Mammary epithelial cell (primary cell): ENCODE measurements at regions of chr4 and their contacts with region 1.

Region 1: GRCh38 chr4:83139514-83140156 is 25.1 kb upstream of the PLAC8 start:
- DNase-seq: no peak
- H3K4me3 ChIP-seq: no peak overlapping the region
- H3K27ac ChIP-seq: no peak overlapping the region
- H3K4me1 ChIP-seq: no peaks in the 10 kb centered on the region
- H3K27me3 ChIP-seq: no peaks in the 10 kb centered on the region
- CTCF ChIP-seq: no peak

Region 2: DNA sequence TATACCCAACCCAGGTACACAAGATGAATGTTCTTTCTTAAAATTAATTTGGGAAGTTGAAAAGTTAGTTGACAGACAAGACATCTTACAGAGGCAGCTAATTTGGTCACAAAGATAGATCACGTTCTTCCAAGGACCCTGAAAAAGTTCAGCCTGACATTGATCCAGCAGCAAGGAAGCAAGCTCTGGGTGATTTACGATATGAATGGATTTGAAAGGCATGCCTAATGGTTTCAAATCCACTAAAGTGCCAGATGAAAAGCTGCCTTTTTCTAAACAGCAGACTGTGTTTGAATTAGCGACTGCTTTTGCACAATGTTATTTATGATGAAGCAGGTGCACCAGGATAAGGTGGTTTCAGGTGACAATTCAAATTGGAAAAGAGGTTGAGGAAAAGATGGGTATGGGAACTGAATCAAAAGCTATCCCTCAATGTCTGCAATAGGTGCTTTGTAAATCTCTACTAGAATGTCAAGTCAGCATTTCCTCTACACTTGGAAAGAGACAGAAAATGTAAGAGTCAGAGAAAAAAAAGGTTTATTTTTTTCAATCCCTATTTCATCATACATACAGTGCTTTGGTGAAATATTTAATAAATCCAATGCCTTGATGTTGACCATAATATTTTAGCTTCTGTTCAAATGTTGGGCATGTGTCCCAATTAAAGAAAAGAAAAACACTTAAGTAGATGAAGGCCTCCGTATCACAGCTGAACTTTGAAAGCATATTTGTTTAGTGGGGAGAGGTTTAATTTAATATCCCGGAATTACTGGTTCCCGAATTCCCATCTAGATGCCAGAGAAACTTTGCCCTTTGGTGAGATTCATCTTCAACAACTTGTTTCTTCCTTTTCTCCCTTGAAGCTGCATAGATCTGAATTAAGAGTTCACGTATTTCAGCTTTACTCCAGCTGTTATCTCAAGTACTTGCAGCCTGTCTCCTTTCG is 1674.0 kb before region 1 on chr4:
- CTCF ChIA-PET with region 1: interaction called, 16 read pairs
- dilution Hi-C with region 1: no loop called
- in situ Hi-C with region 1: no loop called
- intact Hi-C with region 1: no loop called
- DNase-seq: no peak
- H3K4me3 ChIP-seq: no peak overlapping the region
- H3K27ac ChIP-seq: no peak overlapping the region
- H3K4me1 ChIP-seq: peaks cover 11% of the 10 kb centered on the region
- H3K27me3 ChIP-seq: no peaks in the 10 kb centered on the region
- CTCF ChIP-seq: no peak

Region 3: DNA sequence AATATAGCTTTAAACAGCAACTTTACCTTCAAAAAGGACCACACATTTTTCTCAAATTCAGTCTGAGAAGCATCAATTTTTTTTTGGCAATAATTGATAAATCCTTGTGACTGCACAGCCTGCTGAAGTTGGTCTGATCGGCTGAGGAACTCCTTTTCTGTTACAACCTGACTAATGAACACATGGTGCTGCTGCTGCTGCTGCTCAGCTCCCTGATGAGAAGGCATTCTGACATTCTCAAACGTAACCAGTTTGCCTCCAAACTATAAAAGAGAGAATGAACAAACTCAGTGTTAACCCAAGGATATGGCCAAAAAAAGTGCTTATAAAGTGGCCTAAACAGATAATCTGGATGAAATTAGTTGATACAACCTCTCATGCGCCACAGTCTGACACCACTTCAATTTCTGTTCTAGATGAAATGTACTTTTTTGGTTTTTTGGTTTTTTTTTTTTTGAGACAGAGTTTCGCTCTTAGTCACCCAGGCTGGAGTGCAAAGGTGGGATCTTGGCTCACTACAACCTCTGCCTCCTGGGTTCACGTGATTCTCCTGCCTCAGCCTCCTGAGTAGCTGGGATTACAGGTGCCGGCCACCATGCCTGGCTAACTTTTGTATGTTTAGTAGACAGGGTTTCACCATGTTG is 275.2 kb before region 1 on chr4:
- CTCF ChIA-PET with region 1: no interaction called
- dilution Hi-C with region 1: no loop called
- in situ Hi-C with region 1: no loop called
- intact Hi-C with region 1: no loop called
- DNase-seq: no peak
- H3K4me3 ChIP-seq: no peak overlapping the region
- H3K27ac ChIP-seq: peak overlapping the region; percentile 98
- H3K4me1 ChIP-seq: peaks cover 19% of the 10 kb centered on the region
- H3K27me3 ChIP-seq: no peaks in the 10 kb centered on the region
- CTCF ChIP-seq: no peak

Region 4: GRCh38 chr4:83083925-83084475 is 55.6 kb before region 1 on chr4:
- CTCF ChIA-PET with region 1: no interaction called
- dilution Hi-C with region 1: loop called (anchors 5 kb)
- in situ Hi-C with region 1: no loop called
- intact Hi-C with region 1: no loop called
- DNase-seq: no peak
- H3K4me3 ChIP-seq: no peak overlapping the region
- H3K27ac ChIP-seq: no peak overlapping the region
- H3K4me1 ChIP-seq: peaks cover 13% of the 10 kb centered on the region
- H3K27me3 ChIP-seq: no peaks in the 10 kb centered on the region
- CTCF ChIP-seq: peak in 1 of 2 donors; percentile 6

Region 5: DNA sequence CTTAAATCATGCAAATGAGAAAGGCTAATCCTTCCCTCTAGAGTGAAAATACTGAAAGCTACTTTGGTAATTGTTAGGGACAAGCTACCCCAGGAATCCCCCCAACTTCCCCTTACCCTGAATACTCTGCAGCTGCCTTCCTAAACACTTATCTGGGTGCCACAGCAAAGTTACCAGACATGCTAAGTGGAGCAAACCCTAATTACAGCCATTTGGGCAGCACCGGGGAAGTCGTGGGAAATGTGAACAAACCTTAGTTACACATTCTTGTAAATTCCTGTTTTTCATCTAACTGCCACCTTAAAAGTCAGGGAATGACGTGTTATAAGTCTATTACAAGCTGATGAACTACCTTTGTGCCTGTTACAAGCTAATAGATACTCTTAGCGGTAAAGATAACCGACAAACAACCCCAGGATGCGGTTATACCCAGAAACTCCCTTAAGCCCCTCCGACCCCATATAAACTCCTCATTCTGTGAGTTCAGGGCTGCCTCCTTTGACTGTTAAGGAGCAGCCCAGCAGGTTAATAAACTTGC is 40.9 kb after region 1 on chr4:
- CTCF ChIA-PET with region 1: no interaction called
- dilution Hi-C with region 1: loop called (anchors 5 kb)
- in situ Hi-C with region 1: no loop called
- intact Hi-C with region 1: no loop called
- DNase-seq: no peak
- H3K4me3 ChIP-seq: no peak overlapping the region
- H3K27ac ChIP-seq: no peak overlapping the region
- H3K4me1 ChIP-seq: no peaks in the 10 kb centered on the region
- H3K27me3 ChIP-seq: no peaks in the 10 kb centered on the region
- CTCF ChIP-seq: no peak